ENCODE measurements at regions of chr1 and their contacts with region 1.

Region 1: DNA sequence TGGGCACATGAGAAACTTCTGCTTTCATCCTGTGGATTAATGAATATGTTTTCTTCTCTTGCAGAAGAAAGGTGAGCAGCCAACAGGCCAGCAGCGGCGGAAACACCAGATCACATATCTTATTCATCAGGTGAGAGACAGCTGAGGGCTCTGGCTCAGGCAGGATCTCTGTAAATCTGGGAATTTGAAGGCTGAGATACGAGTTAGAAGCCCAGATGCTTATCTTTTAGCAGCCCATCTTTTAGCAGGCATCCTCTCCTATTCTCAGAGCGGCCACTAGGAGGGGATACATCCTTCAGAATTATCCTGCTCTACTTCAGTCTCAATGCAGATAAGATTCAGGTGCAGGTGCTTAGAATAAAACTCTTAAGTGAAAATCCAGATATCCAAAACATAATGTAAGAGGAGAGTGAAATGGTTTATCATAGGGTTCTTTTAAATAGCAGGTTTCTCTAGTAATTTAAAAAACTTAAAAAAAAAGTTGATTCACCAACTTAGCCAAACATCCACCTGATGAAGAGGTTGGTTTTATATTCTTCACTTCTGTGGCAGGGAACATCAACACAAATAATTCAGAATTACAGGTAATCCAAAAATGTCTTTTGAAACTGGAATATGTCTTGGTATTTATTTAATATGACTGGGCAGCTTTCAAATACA is 19.3 kb downstream of the SH2D2A start:
- DNase-seq: peak; percentile 68 to 75
- ATAC-seq: peak; percentile 89 to 91
- H3K4me3 ChIP-seq: no peak overlapping the region
- H3K27ac ChIP-seq: no peak overlapping the region
- H3K4me1 ChIP-seq: no peaks in the 10 kb centered on the region
- CTCF ChIP-seq: peak; percentile 87
- EP300 ChIP-seq: no peak
- POLR2A ChIP-seq: no peak
- RAD21 ChIP-seq: peak; percentile 72 to 78

Region 2: DNA sequence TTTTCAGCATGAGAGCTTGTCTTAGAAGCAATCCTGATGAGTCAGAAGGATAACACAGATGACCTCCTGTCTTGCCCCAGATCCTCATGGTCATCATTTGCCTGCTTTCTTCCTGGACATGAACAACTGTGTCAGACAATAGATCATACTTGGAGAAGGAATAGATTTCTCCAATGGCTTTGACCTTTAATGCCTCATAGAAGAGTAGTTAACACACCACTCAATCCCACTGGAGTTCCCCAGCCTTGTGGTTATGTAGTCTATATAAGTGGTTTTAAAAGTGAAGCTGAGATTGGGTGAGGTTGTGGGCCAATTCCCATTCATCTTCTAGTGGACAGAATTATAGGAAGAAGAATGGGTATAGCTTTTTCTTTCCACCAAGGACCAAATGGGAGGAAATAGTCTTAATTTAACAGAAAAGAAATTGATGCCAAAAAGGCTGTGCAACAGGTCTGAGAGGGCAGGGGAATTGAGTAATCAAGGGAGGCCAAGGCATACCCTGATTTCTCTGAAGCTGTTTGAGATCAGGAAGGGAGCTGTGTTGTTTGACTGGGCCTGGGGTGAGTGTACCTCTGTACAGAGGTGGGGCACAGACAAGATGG is 15.7 kb before region 1 on chr1:
- CTCF ChIA-PET with region 1: interaction called, 62 read pairs
- POLR2A ChIA-PET with region 1: no interaction called
- DNase-seq: peak in 1 of 2 experiments; percentile 14
- ATAC-seq: no peak
- H3K4me3 ChIP-seq: no peak overlapping the region
- H3K27ac ChIP-seq: no peak overlapping the region
- H3K4me1 ChIP-seq: peaks cover 8% of the 10 kb centered on the region; the same call in 2 of the 3 replicates
- CTCF ChIP-seq: no peak
- EP300 ChIP-seq: no peak
- POLR2A ChIP-seq: no peak
- RAD21 ChIP-seq: no peak

Region 3: DNA sequence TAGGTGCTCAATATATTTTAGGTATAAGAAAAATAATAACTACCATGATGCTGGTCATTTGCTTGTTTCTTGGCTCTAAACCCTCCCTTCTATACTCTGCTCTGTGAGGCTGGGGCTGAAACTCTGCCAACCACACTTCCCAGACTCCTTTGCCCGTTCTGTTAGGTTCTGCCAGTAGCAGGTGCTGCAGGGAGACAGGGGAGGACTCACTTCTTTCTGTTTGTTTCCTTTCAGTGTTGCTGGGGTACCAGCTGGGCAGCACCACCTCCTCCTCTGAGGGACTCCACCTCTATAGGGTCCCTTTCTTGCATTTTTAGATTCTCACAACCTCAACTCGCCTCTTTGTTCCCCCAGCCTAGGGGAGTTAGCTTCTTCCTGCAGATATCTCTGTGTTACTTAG is 36.3 kb after region 1 on chr1:
- CTCF ChIA-PET with region 1: interaction called, 13 read pairs
- POLR2A ChIA-PET with region 1: no interaction called
- DNase-seq: no peak
- ATAC-seq: no peak
- H3K4me3 ChIP-seq: no peak overlapping the region
- H3K27ac ChIP-seq: no peak overlapping the region
- H3K4me1 ChIP-seq: no peaks in the 10 kb centered on the region
- CTCF ChIP-seq: no peak
- EP300 ChIP-seq: no peak
- POLR2A ChIP-seq: no peak
- RAD21 ChIP-seq: no peak

Region 4: GRCh38 chr1:156920233-156921052 is 123.1 kb after region 1 on chr1 and contains the start of gene LRRC71:
- CTCF ChIA-PET with region 1: interaction called, 11 read pairs
- POLR2A ChIA-PET with region 1: no interaction called
- DNase-seq: peak; percentile 79 to 90
- ATAC-seq: peak; percentile 87 to 97
- H3K4me3 ChIP-seq: peak within 1 kb of the TSS; percentile 29
- H3K27ac ChIP-seq: peak within 1 kb of the TSS; percentile 65 to 86
- H3K4me1 ChIP-seq: peaks cover 10% of the 10 kb centered on the region
- CTCF ChIP-seq: peak; percentile 94
- EP300 ChIP-seq: no peak
- POLR2A ChIP-seq: peak; percentile 20; the same call in 1 of the 2 replicates
- RAD21 ChIP-seq: peak; percentile 89 to 97
- polyA plus RNA-seq, gene LRRC71: 0.15 TPM in 1 of 2 replicates, not detected in the other

Region 5: DNA sequence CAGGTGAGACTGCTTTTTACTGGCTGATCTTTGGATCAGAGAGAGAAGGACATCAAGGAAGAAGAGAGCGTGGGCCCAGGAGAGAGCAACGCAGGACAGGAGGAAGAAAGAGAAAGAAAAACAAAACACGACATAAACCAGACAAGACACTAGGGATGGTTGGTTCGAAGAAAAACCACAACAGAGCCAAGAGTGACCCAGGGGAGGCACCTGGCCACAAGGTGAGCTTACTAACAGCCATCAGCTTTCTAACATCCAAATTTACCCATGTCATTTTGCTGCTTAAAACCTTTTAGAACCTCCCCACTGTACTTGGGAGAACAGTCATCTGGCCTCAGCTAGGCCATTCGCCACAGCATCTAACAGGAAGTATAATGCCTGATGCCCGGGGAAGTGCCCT is 190.4 kb after region 1 on chr1:
- CTCF ChIA-PET with region 1: no interaction called
- POLR2A ChIA-PET with region 1: no interaction called
- DNase-seq: no peak
- ATAC-seq: no peak
- H3K4me3 ChIP-seq: no peak overlapping the region
- H3K27ac ChIP-seq: no peak overlapping the region
- H3K4me1 ChIP-seq: no peaks in the 10 kb centered on the region
- CTCF ChIP-seq: no peak
- EP300 ChIP-seq: no peak
- POLR2A ChIP-seq: no peak
- RAD21 ChIP-seq: no peak

Measured in A549 (cell line).